Mucosa of descending colon (tissue), 3 donors: ENCODE measurements at regions of chr13 and their contacts with region 1.

Region 1: DNA sequence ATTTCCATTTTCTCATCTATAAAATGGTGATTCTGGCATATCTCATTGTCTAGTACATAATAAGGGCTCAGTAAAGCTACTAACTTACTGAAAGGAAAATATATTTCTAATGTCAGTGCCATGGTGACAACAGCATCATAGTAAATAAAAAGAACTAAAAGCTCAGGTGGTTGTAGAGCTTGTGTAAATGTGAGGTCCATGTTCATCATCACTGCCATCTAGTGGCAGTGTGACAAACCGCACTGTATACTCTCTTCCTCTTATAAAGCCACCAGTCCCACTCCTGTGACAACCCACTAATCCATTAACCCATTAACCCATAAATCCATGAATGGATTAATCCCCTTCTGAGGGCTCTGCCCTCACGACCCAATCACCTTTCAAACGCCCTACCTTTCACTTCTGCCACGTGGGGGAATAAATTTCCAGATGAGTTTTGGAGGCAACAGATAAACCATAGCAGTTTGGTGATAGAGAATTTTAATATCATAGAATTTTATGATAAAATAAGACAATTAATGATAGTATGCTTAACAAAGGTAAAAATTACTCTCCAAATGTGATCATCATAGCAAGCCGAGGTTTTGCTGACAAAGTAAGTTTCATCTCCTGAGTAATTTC is 160.4 kb upstream of the SGCG start:
- DNase-seq: peak in 1 of 3 donors; percentile 73
- ATAC-seq: peak; percentile 73
- H3K4me3 ChIP-seq: no peak overlapping the region
- H3K4me1 ChIP-seq: no peaks in the 10 kb centered on the region
- CTCF ChIP-seq: peak; percentile 71

Region 2: GRCh38 chr13:22726726-22727125 is 293.6 kb before region 1 on chr13:
- intact Hi-C with region 1: no loop called
- DNase-seq: no peak
- ATAC-seq: no peak
- H3K4me3 ChIP-seq: no peak overlapping the region
- H3K4me1 ChIP-seq: no peaks in the 10 kb centered on the region
- CTCF ChIP-seq: no peak

Region 3: GRCh38 chr13:22801402-22802003 is 218.8 kb before region 1 on chr13:
- intact Hi-C with region 1: loop called in 1 of 2 experiments (anchors 5 kb)
- DNase-seq: peak in 1 of 3 donors; percentile 24
- ATAC-seq: no peak
- H3K4me3 ChIP-seq: no peak overlapping the region
- H3K4me1 ChIP-seq: no peaks in the 10 kb centered on the region
- CTCF ChIP-seq: no peak